ENCODE measurements at regions of chr5 and their contacts with region 1.

Region 1: DNA sequence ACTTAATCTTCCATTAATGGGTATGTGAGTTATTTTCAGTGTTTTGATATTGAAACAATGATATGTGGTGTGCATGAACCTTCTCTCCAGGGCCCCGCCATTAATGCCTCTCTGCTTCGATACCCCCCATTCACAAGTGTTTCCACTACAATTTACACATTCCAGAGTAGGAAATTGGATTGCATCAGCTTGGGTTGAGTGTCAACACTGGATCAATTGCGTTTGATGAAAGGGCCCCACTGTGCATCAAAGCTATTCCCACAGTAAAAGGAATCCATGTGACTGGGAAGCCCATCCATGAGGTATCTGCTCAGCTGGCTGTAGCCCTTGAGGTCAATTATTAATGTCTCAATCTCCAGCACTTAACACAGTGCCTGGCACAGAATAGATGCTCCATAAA is 17.8 kb upstream of the LVRN start:
- DNase-seq: no peak
- H3K4me3 ChIP-seq: no peak overlapping the region
- H3K27ac ChIP-seq: no peak overlapping the region
- H3K4me1 ChIP-seq: no peaks in the 10 kb centered on the region; the same call in 1 of the 2 replicates
- H3K27me3 ChIP-seq: no peaks in the 10 kb centered on the region
- CTCF ChIP-seq: no peak

Region 2: DNA sequence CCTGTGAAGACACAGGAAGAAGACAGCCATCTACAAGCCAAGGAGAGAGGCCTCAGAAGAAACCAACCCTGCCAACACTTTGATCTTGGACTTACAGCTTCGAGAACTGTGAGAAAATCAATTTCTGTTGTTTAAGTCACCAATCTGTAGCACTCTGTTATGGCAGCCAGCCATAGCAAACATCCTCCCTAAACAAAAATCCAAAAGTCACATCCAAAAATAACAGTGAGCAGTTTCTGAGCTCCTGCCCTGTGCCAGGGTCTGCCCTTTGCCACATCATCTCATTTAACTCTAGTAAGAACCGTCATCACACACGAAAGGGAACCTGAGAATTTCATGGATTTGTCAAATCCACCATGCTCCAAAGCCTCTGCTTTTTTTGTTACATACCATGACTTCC is 893.6 kb before region 1 on chr5:
- CTCF ChIA-PET with region 1: interaction called, 10 read pairs
- POLR2A ChIA-PET with region 1: no interaction called
- intact Hi-C with region 1: no loop called
- DNase-seq: no peak
- H3K4me3 ChIP-seq: no peak overlapping the region
- H3K27ac ChIP-seq: no peak overlapping the region
- H3K4me1 ChIP-seq: no peaks in the 10 kb centered on the region
- H3K27me3 ChIP-seq: peaks cover 11% of the 10 kb centered on the region
- CTCF ChIP-seq: no peak

Region 3: GRCh38 chr5:117013280-117013877 is 1068.9 kb after region 1 on chr5:
- CTCF ChIA-PET with region 1: no interaction called
- POLR2A ChIA-PET with region 1: no interaction called
- intact Hi-C with region 1: no loop called
- DNase-seq: no peak
- H3K4me3 ChIP-seq: no peak overlapping the region
- H3K27ac ChIP-seq: no peak overlapping the region
- H3K4me1 ChIP-seq: no peaks in the 10 kb centered on the region
- H3K27me3 ChIP-seq: no peaks in the 10 kb centered on the region
- CTCF ChIP-seq: no peak

Measured in PC-9 (cell line).